Stomach (tissue), 19 donors: ENCODE measurements at regions of chr17 and their contacts with region 1.

Region 1: DNA sequence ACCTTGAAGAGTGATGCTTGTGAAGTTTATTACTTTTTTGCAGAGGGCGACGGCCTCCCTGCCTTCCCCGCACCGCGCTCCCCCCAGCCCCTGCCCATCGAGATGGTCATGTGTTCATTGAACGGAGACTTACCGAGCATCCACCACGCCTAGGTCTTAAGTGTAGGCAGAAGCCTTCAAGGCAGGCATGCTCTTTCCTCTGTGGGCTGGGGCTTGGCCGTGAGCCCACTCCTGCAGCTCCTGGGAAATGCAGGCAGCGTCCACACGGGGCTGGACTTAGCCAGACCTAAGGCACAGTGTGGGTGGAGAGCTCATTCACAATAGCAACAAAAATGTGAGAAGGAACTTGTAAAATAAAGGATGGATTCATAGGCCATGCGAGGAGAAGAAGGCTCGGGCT is 19.2 kb downstream of the RNF213 start:
- DNase-seq: peak in 1 of 2 donors; percentile 78
- H3K4me3 ChIP-seq: no peak overlapping the region
- H3K27ac ChIP-seq: no peak overlapping the region
- H3K4me1 ChIP-seq: peaks cover 3 to 31% (median 22%) of the 10 kb centered on the region in 4 donors
- H3K27me3 ChIP-seq: no peaks in the 10 kb centered on the region
- CTCF ChIP-seq: peak in 1 of 7 experiments; percentile 5
- EP300 ChIP-seq: no peak
- POLR2A ChIP-seq: no peak

Region 2: DNA sequence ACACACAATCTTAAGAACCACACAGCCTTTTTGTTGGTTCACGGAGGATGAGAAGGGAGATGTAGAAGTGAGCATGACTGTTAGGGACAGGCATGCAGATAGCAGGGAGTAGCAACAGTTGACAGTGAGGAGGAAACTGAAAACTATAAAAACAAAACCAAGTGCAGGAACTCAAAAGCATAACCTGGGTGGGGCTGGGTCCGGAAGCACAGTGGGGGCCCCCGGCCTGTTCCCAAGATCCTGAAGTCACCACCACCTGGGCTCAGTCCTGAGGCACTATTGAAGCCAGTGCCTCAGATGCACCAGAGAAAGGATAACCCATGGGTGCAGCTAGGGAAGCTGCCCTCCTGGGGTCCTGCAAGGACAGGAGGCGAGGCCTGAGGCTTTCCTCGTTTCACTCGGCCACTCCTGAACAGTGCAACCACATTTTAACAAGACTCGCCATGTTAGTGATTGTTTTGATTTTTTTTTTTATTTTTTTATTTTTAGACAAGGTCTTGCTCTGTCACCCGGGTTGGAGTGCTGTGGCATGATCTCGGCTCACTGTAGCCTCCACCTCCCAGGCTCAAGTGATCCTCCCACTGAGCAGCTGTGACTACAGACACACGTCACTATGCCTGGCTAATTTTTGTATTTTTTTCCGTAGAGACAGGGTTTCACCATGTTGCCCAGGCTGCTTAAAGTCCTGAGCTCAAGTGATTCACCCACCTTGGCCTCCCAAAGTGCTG is 412.9 kb before region 1 on chr17:
- intact Hi-C with region 1: no loop called
- DNase-seq: no peak
- H3K4me3 ChIP-seq: no peak overlapping the region
- H3K27ac ChIP-seq: no peak overlapping the region
- H3K4me1 ChIP-seq: no peaks in the 10 kb centered on the region
- H3K27me3 ChIP-seq: peaks cover 0 to 84% (median 8%) of the 10 kb centered on the region in 3 donors
- CTCF ChIP-seq: no peak
- EP300 ChIP-seq: no peak
- POLR2A ChIP-seq: no peak

Region 3: GRCh38 chr17:80384088-80384960 is 104.4 kb after region 1 on chr17:
- intact Hi-C with region 1: loop called (anchors 5 kb)
- DNase-seq: no peak
- H3K4me3 ChIP-seq: no peak overlapping the region
- H3K27ac ChIP-seq: no peak overlapping the region
- H3K4me1 ChIP-seq: no peaks in the 10 kb centered on the region
- H3K27me3 ChIP-seq: no peaks in the 10 kb centered on the region
- CTCF ChIP-seq: no peak
- EP300 ChIP-seq: no peak
- POLR2A ChIP-seq: no peak